ENCODE measurements at regions of chr16 and their contacts with region 1.

Region 1: DNA sequence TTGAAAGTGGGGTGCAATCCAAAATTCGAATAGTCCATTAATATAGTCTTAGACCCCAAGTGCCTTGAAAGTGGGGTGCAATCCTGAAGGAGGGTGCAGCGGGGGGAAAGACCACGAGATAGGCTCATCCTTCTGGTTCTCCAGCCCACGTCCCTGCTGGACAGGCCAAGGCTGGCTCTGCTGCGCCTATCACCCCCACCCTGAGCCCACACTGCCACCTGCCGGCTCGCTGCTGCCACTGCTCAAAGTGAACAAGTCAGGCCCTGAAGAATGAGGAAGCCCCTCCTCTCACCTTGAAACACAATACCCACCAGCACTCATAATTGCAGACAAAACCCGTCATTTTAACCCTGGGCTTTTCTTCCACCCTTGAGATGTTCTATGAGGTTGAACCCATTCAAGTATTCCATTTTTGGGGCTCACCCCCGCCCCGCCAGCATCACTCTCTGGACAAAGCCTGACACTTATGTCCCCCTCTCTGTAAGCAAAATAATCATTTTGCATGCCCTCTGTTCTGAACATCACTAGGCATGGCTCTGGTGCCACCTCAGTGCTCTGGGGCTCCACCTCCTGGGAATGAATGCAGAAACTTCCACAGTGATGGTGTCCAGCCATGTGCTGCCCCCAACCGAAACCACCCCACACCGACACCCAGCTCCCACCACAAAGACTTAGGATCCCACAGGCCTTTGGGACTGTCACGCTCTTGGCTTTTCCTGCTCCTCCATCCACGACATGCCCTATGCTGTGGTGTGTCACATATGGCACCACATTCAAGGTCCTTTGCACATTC is 56.8 kb downstream of the BEAN1 start:
- DNase-seq: peak; percentile 48
- ATAC-seq: peak; percentile 85
- H3K4me3 ChIP-seq: no peak overlapping the region
- H3K27ac ChIP-seq: no peak overlapping the region
- H3K4me1 ChIP-seq: no peaks in the 10 kb centered on the region
- H3K27me3 ChIP-seq: no peaks in the 10 kb centered on the region
- CTCF ChIP-seq: peak; percentile 93

Region 2: DNA sequence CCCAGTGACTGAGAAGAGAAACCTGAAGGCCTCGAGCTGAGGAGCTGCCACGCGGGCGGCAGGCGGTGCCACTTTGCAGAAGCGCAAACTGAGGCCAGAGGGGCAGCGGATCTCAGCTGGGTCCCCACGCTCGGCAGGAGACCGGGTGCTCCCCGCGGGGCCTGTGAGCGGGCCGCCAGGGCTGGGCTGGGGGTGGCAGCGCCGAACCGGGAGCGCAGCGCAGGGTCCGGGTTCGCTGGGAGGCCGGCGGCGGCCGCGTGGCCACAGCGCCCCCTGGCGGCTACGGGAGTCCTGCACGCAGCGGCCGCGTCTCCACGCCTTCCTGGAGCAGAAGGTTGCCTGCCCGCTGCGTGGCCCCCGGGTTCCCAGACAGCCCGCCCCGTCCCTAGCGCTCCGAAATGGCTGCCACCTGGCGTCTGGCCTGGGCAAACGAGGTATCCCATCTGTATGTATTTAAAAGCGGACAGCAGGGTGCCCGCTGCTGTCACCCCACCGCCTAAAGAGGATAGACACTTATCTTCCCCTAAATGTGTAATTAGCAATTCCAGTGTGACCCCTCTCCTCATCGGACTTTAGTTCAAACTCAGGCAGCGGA is 213.5 kb before region 1 on chr16:
- CTCF ChIA-PET with region 1: no interaction called
- POLR2A ChIA-PET with region 1: no interaction called
- in situ Hi-C with region 1: no loop called
- intact Hi-C with region 1: loop called (anchors 5 kb)
- DNase-seq: no peak
- ATAC-seq: peak; percentile 82
- H3K4me3 ChIP-seq: no peak overlapping the region
- H3K27ac ChIP-seq: no peak overlapping the region
- H3K4me1 ChIP-seq: no peaks in the 10 kb centered on the region
- H3K27me3 ChIP-seq: no peaks in the 10 kb centered on the region
- CTCF ChIP-seq: peak; percentile 95

Region 3: DNA sequence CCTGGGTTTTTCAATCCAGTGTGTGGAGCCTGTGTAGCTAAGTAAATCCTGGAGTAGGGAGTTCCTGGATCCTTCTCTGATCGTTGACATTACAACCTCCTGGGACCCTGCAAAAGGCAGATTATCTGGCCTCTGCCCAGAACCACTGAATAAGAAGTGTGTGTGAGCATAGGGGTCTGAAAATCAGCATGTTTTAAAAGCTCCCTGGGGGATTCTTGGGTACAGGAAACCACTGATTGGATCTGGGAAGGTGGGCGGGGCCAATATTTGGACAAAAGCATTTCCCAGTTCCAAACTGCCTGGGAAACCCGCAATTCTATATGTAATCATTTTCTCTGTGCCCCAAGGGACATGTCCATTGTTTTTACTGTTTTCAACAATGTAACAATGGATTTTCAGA is 84.0 kb before region 1 on chr16:
- CTCF ChIA-PET with region 1: interaction called, 10 read pairs
- POLR2A ChIA-PET with region 1: no interaction called
- in situ Hi-C with region 1: no loop called
- intact Hi-C with region 1: no loop called
- DNase-seq: no peak
- ATAC-seq: no peak
- H3K4me3 ChIP-seq: no peak overlapping the region
- H3K27ac ChIP-seq: no peak overlapping the region
- H3K4me1 ChIP-seq: no peaks in the 10 kb centered on the region
- H3K27me3 ChIP-seq: no peaks in the 10 kb centered on the region
- CTCF ChIP-seq: no peak

Region 4: DNA sequence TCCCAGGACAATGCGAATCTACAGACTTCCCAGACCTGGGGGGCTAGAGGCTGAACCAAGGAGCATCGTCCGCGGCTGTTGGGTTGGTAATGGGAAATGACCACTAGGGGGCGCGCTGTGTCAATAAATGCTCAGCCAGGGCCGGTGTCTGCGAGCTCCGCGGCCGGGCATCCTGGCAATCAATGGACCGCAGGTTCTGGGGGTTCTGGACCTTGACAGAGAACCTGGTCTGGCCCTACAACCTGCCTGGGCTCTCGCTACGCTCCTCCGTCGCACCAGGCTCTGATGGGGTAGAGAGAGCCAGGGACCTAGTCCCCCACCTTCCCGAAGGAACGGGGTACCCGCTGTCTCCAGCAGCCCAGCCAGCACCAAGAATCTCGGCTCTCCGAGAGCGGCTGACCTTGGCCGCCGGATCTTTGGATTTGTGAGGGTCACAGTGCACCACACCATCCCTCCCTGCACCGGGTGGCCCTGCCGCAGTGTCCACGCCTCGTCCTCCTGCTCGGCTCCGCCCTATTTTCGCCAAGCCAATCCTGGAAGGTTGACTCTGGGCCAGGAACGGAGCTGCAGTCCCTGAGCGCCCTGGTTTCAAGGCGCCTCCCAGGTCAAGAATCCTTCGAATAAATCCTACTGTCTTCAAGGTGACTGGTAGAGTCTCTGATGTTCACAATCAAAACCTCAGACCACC is 77.2 kb before region 1 on chr16:
- CTCF ChIA-PET with region 1: interaction called, 14 read pairs
- POLR2A ChIA-PET with region 1: no interaction called
- in situ Hi-C with region 1: no loop called
- intact Hi-C with region 1: loop called (anchors 2 kb)
- DNase-seq: peak; percentile 18
- ATAC-seq: peak; percentile 94
- H3K4me3 ChIP-seq: peak overlapping the region; percentile 58 to 81
- H3K27ac ChIP-seq: no peak overlapping the region
- H3K4me1 ChIP-seq: no peaks in the 10 kb centered on the region
- H3K27me3 ChIP-seq: no peaks in the 10 kb centered on the region
- CTCF ChIP-seq: peak; percentile 82

Measured in Panc1 (cell line).